ENCODE measurements at regions of chr2 and their contacts with region 1.

Region 1: DNA sequence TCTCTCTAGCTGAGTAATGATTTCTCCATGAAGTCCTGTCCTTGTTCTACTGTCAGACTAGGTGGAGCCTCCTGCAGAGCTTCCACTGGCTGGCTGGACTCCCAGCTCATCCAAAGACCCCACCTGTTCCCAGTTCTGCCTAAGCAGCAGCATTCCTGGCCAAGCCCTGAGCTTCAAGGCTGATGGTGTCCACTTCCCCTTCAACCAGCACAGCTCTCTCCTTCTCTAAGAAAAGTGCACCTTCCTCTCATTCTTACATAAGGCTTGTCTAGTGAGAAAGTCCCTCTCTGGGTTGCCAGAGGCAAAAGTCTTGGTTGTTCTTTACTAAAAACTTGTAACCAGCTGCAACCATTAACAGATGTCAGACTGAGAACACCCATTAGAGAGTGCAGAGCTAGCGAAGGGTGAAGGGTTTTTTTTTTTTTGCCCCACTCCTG is 58.9 kb downstream of the CXCR4 start:
- DNase-seq: no peak
- H3K4me3 Mint-ChIP-seq: no peak overlapping the region
- H3K27ac Mint-ChIP-seq: peak overlapping the region; percentile 5
- H3K4me1 Mint-ChIP-seq: peaks cover 56% of the 10 kb centered on the region
- H3K27me3 Mint-ChIP-seq: no peaks in the 10 kb centered on the region

Region 2: GRCh38 chr2:135913727-135914365 is 145.2 kb before region 1 on chr2:
- intact Hi-C with region 1: loop called (anchors 5 kb)
- DNase-seq: no peak
- H3K4me3 Mint-ChIP-seq: no peak overlapping the region
- H3K27ac Mint-ChIP-seq: peak overlapping the region; percentile 76
- H3K4me1 Mint-ChIP-seq: peaks cover 14% of the 10 kb centered on the region
- H3K27me3 Mint-ChIP-seq: no peaks in the 10 kb centered on the region

Region 3: GRCh38 chr2:135985018-135985825 is 73.8 kb before region 1 on chr2 and contains the start of gene DARS1:
- intact Hi-C with region 1: loop called (anchors 2 kb)
- DNase-seq: peak; percentile 80
- H3K4me3 Mint-ChIP-seq: peak within 1 kb of the TSS; percentile 94
- H3K27ac Mint-ChIP-seq: peak within 1 kb of the TSS; percentile 98
- H3K4me1 Mint-ChIP-seq: peaks cover 41% of the 10 kb centered on the region
- H3K27me3 Mint-ChIP-seq: no peaks in the 10 kb centered on the region
- total RNA-seq, gene DARS1: 179 and 183 TPM in 2 replicates

Region 4: DNA sequence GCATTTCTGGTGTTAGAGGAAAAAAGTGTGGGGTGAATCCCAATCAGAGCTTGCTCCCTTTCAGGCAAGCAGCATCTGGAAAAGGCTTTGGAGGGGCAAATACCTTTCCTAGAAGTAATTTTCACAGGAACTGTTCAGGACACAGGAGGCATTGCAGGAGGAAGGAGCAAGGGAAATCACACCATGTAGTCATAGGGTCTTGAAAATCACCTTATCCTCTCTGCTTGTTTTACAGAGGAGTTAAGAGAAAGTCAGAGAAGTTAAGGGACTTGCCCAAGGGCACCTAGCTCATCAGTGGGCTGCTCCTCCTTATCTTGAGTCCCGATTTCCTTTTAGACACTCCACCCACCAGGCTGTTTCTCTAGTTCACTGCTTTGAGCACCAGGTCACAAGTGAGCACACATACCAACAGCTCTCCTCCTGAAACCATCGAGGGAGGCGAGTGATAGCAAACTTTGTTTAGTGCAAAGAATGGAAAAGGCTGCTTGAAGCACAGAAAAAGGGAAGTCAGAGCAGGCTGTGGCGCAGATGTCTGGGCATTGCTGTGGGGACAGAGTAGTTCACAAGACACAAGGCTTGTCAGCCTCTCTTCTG is 148.1 kb after region 1 on chr2:
- intact Hi-C with region 1: loop called (anchors 2 kb)
- DNase-seq: no peak
- H3K4me3 Mint-ChIP-seq: peak overlapping the region; percentile 28
- H3K27ac Mint-ChIP-seq: peak overlapping the region; percentile 85
- H3K4me1 Mint-ChIP-seq: peaks cover 38% of the 10 kb centered on the region
- H3K27me3 Mint-ChIP-seq: no peaks in the 10 kb centered on the region

Measured in activated T-helper 2 cell treated with anti-CD3 and anti-CD28 coated beads, Interferon-gamma antibody, Interleukin-2, Interleukin-4, amounts not matched to agents 10 μg/mL and 5 μg/mL and 100 μg/mL, durations not matched to agents 14 hours and 24 hours and 36 hours (primary cell).